ENCODE measurements at regions of chr6 and their contacts with region 1.

Region 1: DNA sequence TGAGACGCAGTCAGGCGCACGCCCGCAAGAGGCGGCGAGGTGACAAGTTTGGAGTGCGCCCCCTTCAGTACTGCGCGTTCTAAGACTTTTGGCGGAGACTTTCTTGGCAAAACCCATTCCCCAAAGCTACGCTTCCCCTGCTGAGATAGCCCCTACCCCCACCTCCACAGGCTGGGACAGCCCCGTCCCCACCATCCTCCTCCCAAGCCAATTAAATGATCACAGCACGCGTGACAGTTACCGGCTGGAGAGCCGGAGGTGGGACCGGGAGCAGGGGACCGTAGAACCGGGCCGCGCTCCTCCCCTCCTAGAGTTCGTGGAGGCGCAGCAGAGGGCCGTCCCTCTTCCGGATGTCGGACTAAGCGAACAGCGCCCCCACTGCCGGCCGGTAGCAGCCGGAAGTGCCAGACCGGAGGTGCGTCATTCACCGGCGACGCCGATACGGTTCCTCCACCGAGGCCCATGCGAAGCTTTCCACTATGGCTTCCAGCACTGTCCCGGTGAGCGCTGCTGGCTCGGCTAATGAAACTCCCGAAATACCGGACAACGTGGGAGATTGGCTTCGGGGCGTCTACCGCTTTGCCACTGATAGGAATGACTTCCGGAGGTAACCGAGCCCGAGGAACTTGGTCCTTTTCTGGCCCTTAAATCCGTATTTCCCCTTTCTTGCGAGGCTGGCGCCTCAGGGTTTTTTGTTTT is at the start of gene TOMM6:
- DNase-seq: peak; percentile 98
- ATAC-seq: peak; percentile 84
- H3K4me3 ChIP-seq: peak within 1 kb of the TSS; percentile 85 to 99 (median 91)
- H3K4me3 Mint-ChIP-seq: peak within 1 kb of the TSS; percentile 97
- H3K27ac ChIP-seq: peak within 1 kb of the TSS; percentile 75 to 95
- H3K27ac Mint-ChIP-seq: peak within 1 kb of the TSS; percentile 98
- H3K4me1 ChIP-seq: peaks cover 17 to 27% of the 10 kb centered on the region in 2 donors
- H3K4me1 Mint-ChIP-seq: peaks cover 32% of the 10 kb centered on the region
- H3K27me3 ChIP-seq: no peaks in the 10 kb centered on the region
- H3K27me3 Mint-ChIP-seq: no peaks in the 10 kb centered on the region
- CTCF ChIP-seq: peak; percentile 85
- total RNA-seq, gene TOMM6: 117 and 130 TPM in 2 replicates

Region 2: DNA sequence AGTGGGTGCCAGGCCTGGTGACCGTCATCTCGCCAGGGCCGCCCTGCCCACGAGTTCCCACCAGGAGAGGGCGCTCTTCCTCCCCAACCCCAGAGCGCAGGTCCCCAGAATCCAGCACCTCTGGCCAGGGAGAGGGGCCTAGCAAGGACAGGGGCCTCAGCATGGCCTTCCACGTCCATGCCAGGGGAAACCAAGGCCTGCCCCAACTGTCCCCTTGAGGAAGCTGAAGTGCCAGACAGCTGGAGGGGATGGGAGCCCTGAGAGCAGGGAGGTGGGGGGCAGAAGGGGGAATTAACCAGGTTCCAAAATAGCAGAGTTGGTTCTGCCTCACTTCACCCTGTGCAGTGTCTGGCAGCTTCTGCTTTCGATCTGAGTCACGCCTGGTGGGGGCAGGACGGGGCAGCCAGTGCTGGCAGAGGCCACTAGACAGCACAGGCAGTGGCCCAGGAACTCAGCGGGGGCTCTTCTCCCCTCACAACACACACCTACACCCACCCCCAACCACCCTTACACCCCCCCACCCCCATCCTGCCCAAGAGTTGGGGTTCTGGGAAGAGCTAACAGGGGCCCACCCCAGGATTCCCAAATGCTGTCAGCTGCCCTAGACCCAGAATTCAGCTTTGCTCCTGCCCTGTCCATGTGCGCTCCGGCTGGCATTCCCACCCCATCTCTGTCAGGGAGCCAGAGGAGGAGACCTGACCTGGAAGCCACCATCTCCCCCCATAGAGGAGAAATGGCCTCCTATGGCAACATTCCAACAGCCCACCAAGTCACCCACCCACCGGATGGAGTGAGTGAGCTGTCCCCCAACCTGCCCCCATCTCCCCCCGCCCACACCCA is 81.2 kb before region 1 on chr6:
- CTCF ChIA-PET with region 1: interaction called, 19 read pairs
- POLR2A ChIA-PET with region 1: no interaction called
- intact Hi-C with region 1: no loop called
- DNase-seq: peak; percentile 94
- ATAC-seq: peak; percentile 81
- H3K4me3 ChIP-seq: peak overlapping the region in 4 of 5 experiments; percentile 33 to 65 (median 56)
- H3K4me3 Mint-ChIP-seq: peak overlapping the region; percentile 86
- H3K27ac ChIP-seq: peak overlapping the region; percentile 83 to 96
- H3K27ac Mint-ChIP-seq: peak overlapping the region; percentile 100
- H3K4me1 ChIP-seq: peaks cover 84 to 87% of the 10 kb centered on the region in 2 donors
- H3K4me1 Mint-ChIP-seq: peaks cover 97% of the 10 kb centered on the region
- H3K27me3 ChIP-seq: no peaks in the 10 kb centered on the region
- H3K27me3 Mint-ChIP-seq: no peaks in the 10 kb centered on the region
- CTCF ChIP-seq: peak; percentile 89

Region 3: DNA sequence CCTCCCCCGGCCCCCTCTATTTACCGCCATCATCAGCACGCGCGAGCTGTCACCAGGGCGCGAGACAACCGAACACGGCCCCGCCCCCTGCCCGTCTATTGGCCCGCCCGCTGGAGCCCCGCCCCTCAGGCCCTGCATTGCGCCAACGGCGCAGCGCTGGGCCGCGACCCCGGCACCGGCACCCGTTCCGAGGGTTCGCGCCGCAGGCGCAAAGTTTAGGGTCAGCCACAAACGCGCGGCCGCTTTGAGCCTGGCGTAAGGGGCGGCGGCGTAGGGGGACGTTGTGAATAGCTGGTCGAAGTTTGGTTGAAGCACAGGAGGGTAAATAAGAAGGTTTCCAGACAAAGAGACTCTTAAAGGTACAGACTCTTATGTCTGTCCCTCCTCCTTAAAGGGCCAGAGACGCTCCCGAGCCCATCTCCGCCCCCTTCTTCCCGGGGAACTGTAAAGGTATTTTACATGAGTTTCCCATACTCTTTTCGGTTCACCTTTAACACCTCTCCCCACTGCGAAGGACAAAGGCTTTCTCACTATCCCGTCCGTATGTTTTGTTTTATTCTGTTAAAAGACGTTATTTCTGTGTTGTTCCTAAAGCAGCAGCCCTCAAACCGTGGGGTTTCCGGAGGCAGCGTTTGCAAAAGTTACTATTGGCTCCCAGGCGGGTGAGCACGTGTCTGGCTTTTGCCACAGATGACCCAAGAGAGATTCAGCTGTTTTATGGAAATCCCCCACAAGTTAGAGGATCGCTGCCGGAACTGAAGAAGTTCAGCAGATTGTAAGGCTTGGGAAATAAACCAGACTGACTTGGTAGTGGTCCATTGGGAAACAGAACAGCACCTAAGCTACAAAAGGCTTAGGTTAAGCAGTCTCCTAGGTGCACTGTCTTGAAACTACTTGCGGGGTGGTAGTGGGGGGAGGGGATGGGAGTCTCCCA is 108.2 kb after region 1 on chr6 and contains the start of gene USP49:
- CTCF ChIA-PET with region 1: interaction called, 20 read pairs
- POLR2A ChIA-PET with region 1: interaction called, 11 read pairs
- intact Hi-C with region 1: loop called (anchors 1 kb)
- DNase-seq: peak; percentile 93
- ATAC-seq: peak; percentile 92
- H3K4me3 ChIP-seq: peak within 1 kb of the TSS; percentile 65 to 96 (median 85)
- H3K4me3 Mint-ChIP-seq: no peak within 1 kb of the TSS
- H3K27ac ChIP-seq: peak within 1 kb of the TSS; percentile 71 to 92
- H3K27ac Mint-ChIP-seq: peak within 1 kb of the TSS; percentile 89
- H3K4me1 ChIP-seq: peaks cover 15 to 17% of the 10 kb centered on the region in 2 donors
- H3K4me1 Mint-ChIP-seq: peaks cover 10% of the 10 kb centered on the region
- H3K27me3 ChIP-seq: no peaks in the 10 kb centered on the region
- H3K27me3 Mint-ChIP-seq: no peaks in the 10 kb centered on the region
- CTCF ChIP-seq: no peak
- total RNA-seq, gene USP49: 7.5 and 9.9 TPM in 2 replicates

Region 4: DNA sequence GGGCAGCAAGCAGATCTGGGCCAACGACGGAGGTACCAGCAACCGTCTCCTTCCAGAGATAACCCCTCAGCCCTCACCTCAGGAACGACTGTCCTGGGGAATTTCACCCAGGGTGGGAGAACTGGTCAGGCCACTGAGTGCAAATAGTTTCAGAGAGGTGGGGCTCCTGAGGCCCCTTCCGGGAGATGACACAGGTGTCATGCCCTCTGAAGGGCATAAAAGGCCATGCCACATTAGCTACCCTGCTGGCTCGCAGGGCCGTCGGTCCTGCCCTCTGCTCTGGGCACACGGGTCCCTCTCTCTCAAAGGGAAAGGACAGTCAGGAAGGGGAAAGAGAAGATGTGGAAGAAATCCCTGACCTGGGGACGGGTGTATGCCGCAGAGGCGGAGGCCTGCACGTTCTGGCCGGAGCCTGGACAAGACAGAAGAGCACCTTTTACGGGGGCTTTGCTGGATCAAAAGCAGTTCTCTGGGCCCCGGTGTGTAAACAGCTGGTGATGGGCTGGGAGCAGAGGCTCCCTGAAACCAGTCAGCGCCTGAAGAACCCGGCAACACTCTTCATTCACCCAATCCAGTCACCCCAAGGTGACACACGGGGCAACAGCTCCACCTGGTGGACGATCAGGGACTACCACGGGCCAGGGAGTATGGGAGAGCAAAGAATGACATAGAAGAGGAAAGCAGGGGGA is 256.6 kb after region 1 on chr6:
- CTCF ChIA-PET with region 1: interaction called, 198 read pairs
- POLR2A ChIA-PET with region 1: interaction called, 36 read pairs
- intact Hi-C with region 1: loop called (anchors 2 kb)
- DNase-seq: peak; percentile 87
- ATAC-seq: peak; percentile 32
- H3K4me3 ChIP-seq: peak overlapping the region in 1 of 5 experiments; percentile 23
- H3K4me3 Mint-ChIP-seq: peak overlapping the region; percentile 69
- H3K27ac ChIP-seq: peak overlapping the region; percentile 26 to 56
- H3K27ac Mint-ChIP-seq: peak overlapping the region; percentile 88
- H3K4me1 ChIP-seq: peaks cover 67 to 80% of the 10 kb centered on the region in 2 donors
- H3K4me1 Mint-ChIP-seq: peaks cover 82% of the 10 kb centered on the region
- H3K27me3 ChIP-seq: no peaks in the 10 kb centered on the region
- H3K27me3 Mint-ChIP-seq: no peaks in the 10 kb centered on the region
- CTCF ChIP-seq: peak; percentile 89

Region 5: GRCh38 chr6:42563697-42564505 is 776.5 kb after region 1 on chr6 and contains the start of gene UBR2:
- CTCF ChIA-PET with region 1: no interaction called
- POLR2A ChIA-PET with region 1: interaction called, 3 read pairs
- intact Hi-C with region 1: loop called (anchors 2 kb)
- DNase-seq: peak; percentile 95
- ATAC-seq: peak; percentile 96
- H3K4me3 ChIP-seq: peak within 1 kb of the TSS; percentile 78 to 98 (median 91)
- H3K4me3 Mint-ChIP-seq: peak within 1 kb of the TSS; percentile 98
- H3K27ac ChIP-seq: peak within 1 kb of the TSS; percentile 90 to 91
- H3K27ac Mint-ChIP-seq: peak within 1 kb of the TSS; percentile 98
- H3K4me1 ChIP-seq: peaks cover 19 to 25% of the 10 kb centered on the region in 2 donors
- H3K4me1 Mint-ChIP-seq: peaks cover 36% of the 10 kb centered on the region
- H3K27me3 ChIP-seq: no peaks in the 10 kb centered on the region
- H3K27me3 Mint-ChIP-seq: no peaks in the 10 kb centered on the region
- CTCF ChIP-seq: peak; percentile 41
- total RNA-seq, gene UBR2: 56.2 and 61.5 TPM in 2 replicates